Psoas muscle (tissue), 8 donors: ENCODE measurements at regions of chr3 and their contacts with region 1.

Region 1: DNA sequence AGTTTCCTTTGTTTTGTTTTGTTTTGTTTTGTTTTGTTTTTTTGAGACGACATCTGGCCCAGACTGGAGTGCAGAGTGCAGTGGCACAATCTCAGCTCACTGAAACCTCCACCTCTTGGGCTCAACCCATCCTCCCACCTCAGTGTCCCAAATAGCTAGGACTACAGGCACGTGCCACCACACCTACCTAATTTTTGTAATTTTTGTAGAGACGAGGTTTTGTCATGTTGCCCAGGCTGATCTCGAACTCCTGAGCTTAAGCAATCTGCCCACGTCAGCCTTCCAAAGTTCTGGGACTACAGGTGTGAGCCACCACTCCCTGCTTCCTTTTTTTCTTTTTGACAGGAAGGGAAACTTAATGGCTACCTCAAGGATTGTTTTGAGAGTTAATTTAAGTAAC is 9.1 kb downstream of the CCDC66 start:
- DNase-seq: no peak
- ATAC-seq: no peak
- H3K4me3 ChIP-seq: no peak overlapping the region
- H3K27ac ChIP-seq: no peak overlapping the region
- H3K4me1 ChIP-seq: no peaks in the 10 kb centered on the region
- H3K27me3 ChIP-seq: no peaks in the 10 kb centered on the region
- CTCF ChIP-seq: no peak

Region 2: GRCh38 chr3:56629047-56629446 is 62.9 kb after region 1 on chr3:
- intact Hi-C with region 1: loop called in 1 of 2 experiments (anchors 10 kb)
- DNase-seq: no peak
- ATAC-seq: no peak
- H3K4me3 ChIP-seq: no peak overlapping the region
- H3K27ac ChIP-seq: no peak overlapping the region
- H3K4me1 ChIP-seq: no peaks in the 10 kb centered on the region
- H3K27me3 ChIP-seq: no peaks in the 10 kb centered on the region
- CTCF ChIP-seq: no peak

Region 3: DNA sequence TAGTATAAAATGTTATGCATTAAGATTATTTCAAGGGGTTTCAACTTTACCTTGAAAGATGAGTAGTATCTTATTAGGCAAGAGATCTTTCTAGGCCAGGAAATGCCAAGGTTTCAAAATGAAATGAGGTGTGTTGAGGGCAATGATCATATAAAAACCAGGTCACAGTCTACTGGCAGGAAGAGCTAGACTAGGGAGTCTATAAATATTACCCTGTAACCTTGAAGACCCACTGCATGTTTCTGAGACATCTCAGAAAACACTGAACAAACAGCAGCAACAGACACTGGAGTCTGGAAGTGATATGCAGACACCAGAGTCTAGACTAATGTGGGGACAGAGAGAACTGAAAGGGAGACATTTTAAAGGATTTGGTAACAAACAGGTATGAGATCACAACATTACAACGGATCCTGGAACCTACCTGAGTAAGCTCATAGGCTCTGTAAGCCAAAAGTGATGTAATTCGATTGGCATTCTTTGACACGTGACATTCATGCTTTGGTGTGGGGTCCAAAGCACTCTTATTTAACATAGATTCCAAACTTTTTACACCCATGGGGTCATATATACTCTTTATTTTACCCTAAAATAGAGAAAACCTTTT is 102.0 kb after region 1 on chr3:
- intact Hi-C with region 1: loop called in 1 of 2 experiments (anchors 10 kb)
- DNase-seq: no peak
- ATAC-seq: peak in 1 of 4 donors; percentile 19
- H3K4me3 ChIP-seq: no peak overlapping the region
- H3K27ac ChIP-seq: no peak overlapping the region
- H3K4me1 ChIP-seq: no peaks in the 10 kb centered on the region
- H3K27me3 ChIP-seq: no peaks in the 10 kb centered on the region
- CTCF ChIP-seq: no peak